K562 (cell line): ENCODE measurements at regions of chr17 and their contacts with region 1.

Region 1: DNA sequence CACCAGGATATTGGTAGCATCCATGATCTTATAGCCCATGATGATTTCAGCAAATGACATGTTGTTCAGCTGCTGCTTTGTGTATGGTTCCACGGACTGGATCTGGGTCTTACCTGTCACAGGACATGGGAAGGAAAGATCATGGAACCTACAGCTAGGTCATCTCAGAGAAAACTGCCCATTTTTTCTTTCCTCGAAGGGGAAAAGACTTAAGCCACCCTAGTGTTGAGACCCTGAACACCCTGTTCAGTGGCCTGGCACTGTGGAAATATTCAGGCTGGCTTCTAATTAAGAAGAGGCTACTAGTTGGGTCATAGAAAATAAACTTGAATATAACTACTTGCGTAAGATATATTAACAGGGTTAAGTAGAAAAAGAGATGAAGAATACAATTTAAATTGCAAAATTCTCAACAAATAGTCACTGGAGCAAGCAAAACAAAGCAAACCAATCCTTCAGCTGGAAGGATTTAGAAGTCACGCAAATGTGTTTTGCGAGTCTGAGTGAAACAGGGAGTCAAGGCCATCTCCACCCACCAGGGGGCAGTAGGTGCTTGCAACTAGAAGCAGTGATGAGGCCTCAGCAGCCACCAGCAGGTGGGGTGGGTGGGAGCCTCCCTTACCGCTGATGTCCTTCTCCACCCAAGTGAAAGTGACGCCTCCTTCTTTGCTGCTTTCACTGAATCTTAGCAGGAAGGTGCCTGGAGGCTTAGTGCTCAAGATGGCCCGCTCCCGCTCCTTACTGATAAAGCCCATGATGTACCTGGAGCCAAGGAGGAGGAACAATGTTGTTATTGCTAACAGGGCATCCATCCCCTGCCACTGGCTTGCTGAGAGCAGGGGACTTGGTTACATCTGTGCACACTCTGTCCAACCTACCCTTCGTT is 34.3 kb downstream of the STAT5A start:
- DNase-seq: peak; percentile 91 to 98 (median 93)
- ATAC-seq: peak; percentile 80
- H3K4me3 ChIP-seq: no peak overlapping the region
- H3K27ac ChIP-seq: peak overlapping the region; percentile 100
- H3K4me1 ChIP-seq: peaks cover 46 to 50% of the 10 kb centered on the region in 2 experiments
- H3K27me3 ChIP-seq: no peaks in the 10 kb centered on the region
- CTCF ChIP-seq: peak; percentile 100
- EP300 ChIP-seq: no peak; the same call in 1 of the 2 replicates
- POLR2A ChIP-seq: no peak
- RAD21 ChIP-seq: peak; percentile 99

Region 2: GRCh38 chr17:41710468-41711090 is 612.0 kb before region 1 on chr17:
- CTCF ChIA-PET with region 1: no interaction called
- POLR2A ChIA-PET with region 1: no interaction called
- in situ Hi-C with region 1: no loop called
- intact Hi-C with region 1: no loop called
- DNase-seq: peak in 1 of 4 experiments; percentile 36
- ATAC-seq: no peak
- H3K4me3 ChIP-seq: no peak overlapping the region
- H3K27ac ChIP-seq: no peak overlapping the region
- H3K4me1 ChIP-seq: no peaks in the 10 kb centered on the region; a peak in 3 of 5 replicates
- H3K27me3 ChIP-seq: peaks cover 8 to 14% of the 10 kb centered on the region in 2 experiments
- CTCF ChIP-seq: no peak
- EP300 ChIP-seq: no peak
- POLR2A ChIP-seq: no peak
- RAD21 ChIP-seq: no peak

Region 3: GRCh38 chr17:42270596-42270995 is 52.0 kb before region 1 on chr17:
- CTCF ChIA-PET with region 1: no interaction called
- POLR2A ChIA-PET with region 1: no interaction called
- in situ Hi-C with region 1: no loop called
- intact Hi-C with region 1: no loop called
- DNase-seq: no peak
- ATAC-seq: peak; percentile 2
- H3K4me3 ChIP-seq: peak overlapping the region; percentile 81
- H3K27ac ChIP-seq: peak overlapping the region; percentile 93
- H3K4me1 ChIP-seq: peaks cover 14 to 21% of the 10 kb centered on the region in 2 experiments
- H3K27me3 ChIP-seq: no peaks in the 10 kb centered on the region
- CTCF ChIP-seq: no peak
- EP300 ChIP-seq: no peak
- POLR2A ChIP-seq: 0 out of 2 replicates have a peak, but pooled peaks have one; percentile 30
- RAD21 ChIP-seq: no peak

Region 4: GRCh38 chr17:42388381-42389134 is 65.9 kb after region 1 on chr17 and contains the start of gene STAT3:
- CTCF ChIA-PET with region 1: no interaction called
- POLR2A ChIA-PET with region 1: interaction called, 5 read pairs
- in situ Hi-C with region 1: no loop called
- intact Hi-C with region 1: loop called (anchors 5 kb)
- DNase-seq: peak; percentile 98 to 100 (median 98)
- ATAC-seq: peak; percentile 98
- H3K4me3 ChIP-seq: peak within 1 kb of the TSS; percentile 91
- H3K27ac ChIP-seq: peak within 1 kb of the TSS; percentile 90
- H3K4me1 ChIP-seq: peaks cover 8 to 14% of the 10 kb centered on the region in 2 experiments
- H3K27me3 ChIP-seq: no peaks in the 10 kb centered on the region
- CTCF ChIP-seq: no peak
- EP300 ChIP-seq: peak; percentile 100
- POLR2A ChIP-seq: peak; percentile 81; the same call in 1 of the 2 replicates
- RAD21 ChIP-seq: no peak
- polyA plus RNA-seq, gene STAT3: 114 to 160 TPM

Region 5: GRCh38 chr17:42405963-42406495 is 83.4 kb after region 1 on chr17:
- CTCF ChIA-PET with region 1: interaction called, 46 read pairs
- POLR2A ChIA-PET with region 1: interaction called, 4 read pairs
- in situ Hi-C with region 1: loop called (anchors 5 kb)
- intact Hi-C with region 1: loop called (anchors 1 kb)
- DNase-seq: peak; percentile 67 to 84 (median 72)
- ATAC-seq: peak; percentile 81
- H3K4me3 ChIP-seq: no peak overlapping the region
- H3K27ac ChIP-seq: no peak overlapping the region
- H3K4me1 ChIP-seq: peaks cover 45 to 50% of the 10 kb centered on the region in 2 experiments
- H3K27me3 ChIP-seq: no peaks in the 10 kb centered on the region
- CTCF ChIP-seq: peak; percentile 89 to 91 (median 90)
- EP300 ChIP-seq: no peak
- POLR2A ChIP-seq: no peak
- RAD21 ChIP-seq: peak; percentile 74 to 86

Region 6: DNA sequence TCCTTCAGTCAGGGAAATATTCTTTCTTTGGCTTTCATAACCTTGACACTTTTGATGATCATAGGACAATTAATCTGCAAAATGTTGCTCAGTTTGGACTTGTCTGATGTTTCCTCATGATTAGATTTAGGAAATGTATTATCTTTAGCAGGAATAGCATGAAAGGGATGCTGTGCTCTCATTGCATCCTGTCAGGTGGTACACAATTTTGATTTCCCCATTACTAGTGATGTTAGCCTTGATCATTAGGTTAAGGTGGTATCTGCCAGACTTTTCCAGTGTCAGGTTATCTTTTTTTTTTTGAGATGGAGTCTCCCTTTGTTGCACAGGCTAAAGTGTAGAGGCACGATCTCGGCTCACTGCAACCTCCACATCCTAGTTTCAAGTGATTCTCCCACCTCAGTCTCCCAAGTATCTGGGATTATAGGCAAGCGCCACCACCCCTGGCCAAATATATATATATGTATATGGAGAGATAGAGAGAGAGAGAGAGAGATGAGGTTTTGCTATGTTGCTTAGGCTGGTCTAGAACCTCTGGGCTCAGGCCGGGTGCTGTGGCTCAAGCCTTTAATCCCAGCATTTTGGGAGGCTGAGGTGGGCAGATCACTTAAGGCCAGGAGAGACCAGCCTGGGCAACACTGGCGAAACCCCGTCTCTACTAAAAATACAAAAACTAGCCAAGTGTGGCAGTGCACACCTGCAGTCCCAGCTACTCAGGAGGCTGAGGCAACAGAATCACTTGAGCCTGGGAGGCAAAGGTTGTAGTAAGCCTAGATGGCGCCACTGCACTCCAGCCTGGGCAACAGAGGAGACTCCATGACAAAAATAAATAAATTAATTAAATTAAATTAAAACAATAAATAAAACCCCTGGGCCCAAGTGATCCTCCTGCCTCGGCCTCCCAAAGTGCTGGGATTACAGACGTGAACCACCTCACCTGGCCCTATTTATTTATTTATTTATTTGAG is 116.3 kb after region 1 on chr17:
- CTCF ChIA-PET with region 1: no interaction called
- POLR2A ChIA-PET with region 1: no interaction called
- in situ Hi-C with region 1: no loop called
- intact Hi-C with region 1: no loop called
- DNase-seq: peak in 1 of 4 experiments; percentile 52
- ATAC-seq: peak; percentile 82
- H3K4me3 ChIP-seq: no peak overlapping the region
- H3K27ac ChIP-seq: no peak overlapping the region
- H3K4me1 ChIP-seq: peaks cover 0 to 3% of the 10 kb centered on the region in 2 experiments; a peak in 2 of 5 replicates
- H3K27me3 ChIP-seq: no peaks in the 10 kb centered on the region
- CTCF ChIP-seq: peak; percentile 39 to 60 (median 49); a peak in 4 of 6 replicates
- EP300 ChIP-seq: no peak
- POLR2A ChIP-seq: no peak
- RAD21 ChIP-seq: peak in 1 of 2 experiments; percentile 49; a peak in 2 of 4 replicates

Region 7: GRCh38 chr17:42459256-42459800 is 136.7 kb after region 1 on chr17:
- CTCF ChIA-PET with region 1: interaction called, 3 read pairs
- POLR2A ChIA-PET with region 1: interaction called, 3 read pairs
- in situ Hi-C with region 1: no loop called
- intact Hi-C with region 1: loop called (anchors 5 kb)
- DNase-seq: peak; percentile 56 to 85 (median 60)
- ATAC-seq: peak; percentile 74
- H3K4me3 ChIP-seq: peak overlapping the region; percentile 76
- H3K27ac ChIP-seq: peak overlapping the region; percentile 77
- H3K4me1 ChIP-seq: peaks cover 22 to 26% of the 10 kb centered on the region in 2 experiments
- H3K27me3 ChIP-seq: no peaks in the 10 kb centered on the region
- CTCF ChIP-seq: peak; percentile 61 to 69 (median 65)
- EP300 ChIP-seq: no peak; the same call in 1 of the 2 replicates
- POLR2A ChIP-seq: no peak
- RAD21 ChIP-seq: peak in 1 of 2 experiments; percentile 30; a peak in 1 of 4 replicates

Region 8: DNA sequence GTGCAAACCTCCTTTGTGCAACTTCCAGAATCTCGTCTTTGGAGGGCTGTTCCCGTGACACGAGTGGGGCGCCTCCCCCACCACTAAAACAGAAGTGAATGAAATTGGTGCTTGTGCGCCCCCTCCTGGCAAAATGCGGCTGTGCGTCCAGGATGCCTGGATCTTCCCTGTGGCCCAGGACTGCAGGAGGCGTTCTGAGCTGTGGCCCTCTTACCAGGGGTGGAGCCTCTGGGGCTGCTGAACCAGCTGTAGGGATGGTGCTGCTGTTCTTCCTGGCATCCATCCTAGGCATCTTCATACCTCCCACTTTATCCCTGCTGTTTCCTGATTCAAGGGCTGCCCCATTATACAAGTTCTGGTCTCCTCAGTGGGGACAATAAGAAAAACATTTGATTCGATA is 194.9 kb after region 1 on chr17:
- CTCF ChIA-PET with region 1: interaction called, 43 read pairs
- POLR2A ChIA-PET with region 1: interaction called, 6 read pairs
- in situ Hi-C with region 1: no loop called
- intact Hi-C with region 1: loop called (anchors 5 kb)
- DNase-seq: peak; percentile 85 to 94 (median 91)
- ATAC-seq: peak; percentile 80
- H3K4me3 ChIP-seq: no peak overlapping the region
- H3K27ac ChIP-seq: peak overlapping the region; percentile 86
- H3K4me1 ChIP-seq: peaks cover 51 to 63% of the 10 kb centered on the region in 2 experiments
- H3K27me3 ChIP-seq: no peaks in the 10 kb centered on the region
- CTCF ChIP-seq: peak; percentile 98
- EP300 ChIP-seq: no peak
- POLR2A ChIP-seq: no peak
- RAD21 ChIP-seq: peak; percentile 73 to 82

Region 9: GRCh38 chr17:42527273-42527703 is 204.7 kb after region 1 on chr17:
- CTCF ChIA-PET with region 1: interaction called, 15 read pairs
- POLR2A ChIA-PET with region 1: interaction called, 3 read pairs
- in situ Hi-C with region 1: loop called (anchors 5 kb)
- intact Hi-C with region 1: loop called (anchors 1 kb)
- DNase-seq: peak; percentile 54 to 87 (median 68)
- ATAC-seq: peak; percentile 87
- H3K4me3 ChIP-seq: no peak overlapping the region
- H3K27ac ChIP-seq: peak overlapping the region; percentile 23; the same call in 2 of the 3 replicates
- H3K4me1 ChIP-seq: peaks cover 31 to 63% of the 10 kb centered on the region in 2 experiments
- H3K27me3 ChIP-seq: no peaks in the 10 kb centered on the region
- CTCF ChIP-seq: peak; percentile 90 to 94 (median 90)
- EP300 ChIP-seq: no peak
- POLR2A ChIP-seq: no peak
- RAD21 ChIP-seq: peak; percentile 71 to 93

Region 10: DNA sequence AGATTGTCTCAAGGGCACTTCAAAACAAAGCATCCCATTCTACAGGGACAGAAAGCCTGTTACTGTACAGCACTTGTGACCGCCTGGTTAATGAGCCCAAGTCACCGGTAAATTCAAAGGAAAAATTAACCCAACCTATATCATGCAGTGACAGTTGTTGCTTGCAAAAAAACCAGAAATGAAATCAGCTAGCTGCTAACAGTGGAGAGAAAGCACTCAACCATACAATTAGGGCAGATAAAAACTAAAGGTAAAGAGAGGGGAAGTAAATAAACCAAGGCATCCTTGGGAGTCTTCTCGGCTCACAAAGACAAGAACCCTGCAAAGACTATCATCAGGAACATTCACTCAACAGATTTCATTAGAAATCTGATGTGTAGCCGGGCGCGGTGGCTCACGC is 280.7 kb after region 1 on chr17:
- CTCF ChIA-PET with region 1: no interaction called
- POLR2A ChIA-PET with region 1: no interaction called
- in situ Hi-C with region 1: no loop called
- intact Hi-C with region 1: no loop called
- DNase-seq: no peak
- ATAC-seq: no peak
- H3K4me3 ChIP-seq: no peak overlapping the region
- H3K27ac ChIP-seq: no peak overlapping the region
- H3K4me1 ChIP-seq: peaks cover 7 to 13% of the 10 kb centered on the region in 2 experiments; a peak in 3 of 5 replicates
- H3K27me3 ChIP-seq: no peaks in the 10 kb centered on the region
- CTCF ChIP-seq: no peak
- EP300 ChIP-seq: no peak
- POLR2A ChIP-seq: no peak
- RAD21 ChIP-seq: no peak